Naive thymus-derived CD4-positive, alpha-beta T cell (primary cell): ENCODE measurements at regions of chr3 and their contacts with region 1.

Region 1: GRCh38 chr3:30597131-30597768 is 9.2 kb upstream of the TGFBR2 start:
- DNase-seq: no peak
- ATAC-seq: no peak
- H3K4me3 ChIP-seq: no peak overlapping the region
- H3K4me3 Mint-ChIP-seq: peak overlapping the region in 1 of 10 donors; percentile 29
- H3K27ac ChIP-seq: no peak overlapping the region
- H3K27ac Mint-ChIP-seq: no peak overlapping the region
- H3K4me1 ChIP-seq: peaks cover 0 to 15% of the 10 kb centered on the region in 2 donors
- H3K4me1 Mint-ChIP-seq: peaks cover 14 to 53% (median 41%) of the 10 kb centered on the region in 7 donors
- H3K27me3 ChIP-seq: no peaks in the 10 kb centered on the region
- H3K27me3 Mint-ChIP-seq: no peaks in the 10 kb centered on the region

Region 2: DNA sequence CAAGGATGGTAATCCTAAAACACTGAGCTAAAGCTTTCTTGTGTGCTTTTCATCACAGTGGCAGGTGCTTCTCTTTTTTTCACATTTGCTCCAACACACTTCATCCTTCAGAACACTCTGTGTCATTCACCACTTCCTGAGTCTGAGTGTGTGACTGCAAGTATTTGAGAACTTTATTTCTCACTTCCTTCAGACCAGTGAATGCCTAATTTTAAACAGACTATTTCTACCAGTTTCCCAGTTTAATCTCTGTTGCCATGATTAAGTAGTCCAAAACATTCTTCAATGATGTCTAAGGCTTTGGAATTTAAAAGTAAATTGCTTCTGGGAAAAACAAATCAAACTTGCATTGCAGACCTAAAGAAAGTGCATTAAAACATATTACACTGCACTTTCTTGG is 775.2 kb before region 1 on chr3:
- CTCF ChIA-PET with region 1: no interaction called
- POLR2A ChIA-PET with region 1: no interaction called
- intact Hi-C with region 1: no loop called
- DNase-seq: no peak
- ATAC-seq: no peak
- H3K4me3 ChIP-seq: no peak overlapping the region
- H3K4me3 Mint-ChIP-seq: no peak overlapping the region
- H3K27ac ChIP-seq: no peak overlapping the region
- H3K27ac Mint-ChIP-seq: no peak overlapping the region
- H3K4me1 ChIP-seq: no peaks in the 10 kb centered on the region
- H3K4me1 Mint-ChIP-seq: no peaks in the 10 kb centered on the region
- H3K27me3 ChIP-seq: peaks cover 0 to 3% of the 10 kb centered on the region in 2 donors
- H3K27me3 Mint-ChIP-seq: peaks cover 0 to 6% (median 5%) of the 10 kb centered on the region in 5 donors

Region 3: GRCh38 chr3:30496066-30496966 is 100.9 kb before region 1 on chr3:
- CTCF ChIA-PET with region 1: no interaction called
- POLR2A ChIA-PET with region 1: no interaction called
- intact Hi-C with region 1: no loop called
- DNase-seq: peak in 2 of 9 donors; percentile 8 to 15
- ATAC-seq: no peak
- H3K4me3 ChIP-seq: no peak overlapping the region
- H3K4me3 Mint-ChIP-seq: peak overlapping the region in 9 of 10 donors; percentile 40 to 78 (median 59)
- H3K27ac ChIP-seq: no peak overlapping the region
- H3K27ac Mint-ChIP-seq: peak overlapping the region in 7 of 9 donors; percentile 32 to 76 (median 63)
- H3K4me1 ChIP-seq: peaks cover 0 to 16% of the 10 kb centered on the region in 2 donors
- H3K4me1 Mint-ChIP-seq: peaks cover 9 to 33% (median 25%) of the 10 kb centered on the region in 7 donors
- H3K27me3 ChIP-seq: no peaks in the 10 kb centered on the region
- H3K27me3 Mint-ChIP-seq: no peaks in the 10 kb centered on the region

Region 4: GRCh38 chr3:30524357-30525040 is 72.8 kb before region 1 on chr3:
- CTCF ChIA-PET with region 1: interaction called, 3 read pairs
- POLR2A ChIA-PET with region 1: no interaction called
- intact Hi-C with region 1: loop called in 1 of 2 experiments (anchors 5 kb)
- DNase-seq: peak in 1 of 9 donors; percentile 4
- ATAC-seq: peak; percentile 41
- H3K4me3 ChIP-seq: no peak overlapping the region
- H3K4me3 Mint-ChIP-seq: peak overlapping the region in 9 of 10 donors; percentile 4 to 66 (median 48)
- H3K27ac ChIP-seq: no peak overlapping the region
- H3K27ac Mint-ChIP-seq: peak overlapping the region in 5 of 9 donors; percentile 0 to 63 (median 16)
- H3K4me1 ChIP-seq: no peaks in the 10 kb centered on the region
- H3K4me1 Mint-ChIP-seq: peaks cover 8 to 27% (median 23%) of the 10 kb centered on the region in 7 donors
- H3K27me3 ChIP-seq: no peaks in the 10 kb centered on the region
- H3K27me3 Mint-ChIP-seq: peaks cover 0 to 3% (median 0%) of the 10 kb centered on the region in 5 donors